PC-9 (cell line): ENCODE measurements at regions of chr7 and their contacts with region 1.

Region 1: DNA sequence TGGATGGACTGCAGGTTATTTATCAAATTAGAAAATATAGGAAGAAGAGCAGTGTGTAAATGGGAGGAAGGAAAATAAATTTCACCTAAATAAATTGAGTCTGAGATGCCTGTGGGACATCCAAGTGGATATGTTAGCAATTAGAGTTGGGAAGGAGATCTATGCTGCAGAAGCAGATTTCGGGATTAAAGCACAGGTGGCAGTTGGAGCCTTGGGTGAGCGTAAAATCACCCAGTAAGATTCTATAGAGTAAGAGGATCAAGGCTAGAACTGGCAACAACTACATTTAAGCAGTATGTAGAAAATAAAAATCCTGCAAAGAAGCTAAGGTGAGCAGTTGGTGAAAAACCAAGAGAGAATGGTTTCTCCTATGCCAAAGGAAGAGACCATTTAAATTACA is 8.4 kb downstream of the TRIM4 start:
- DNase-seq: no peak
- H3K4me3 ChIP-seq: no peak overlapping the region
- H3K27ac ChIP-seq: no peak overlapping the region
- H3K4me1 ChIP-seq: no peaks in the 10 kb centered on the region
- H3K27me3 ChIP-seq: no peaks in the 10 kb centered on the region
- CTCF ChIP-seq: no peak

Region 2: GRCh38 chr7:99631295-99632109 is 279.5 kb before region 1 on chr7:
- CTCF ChIA-PET with region 1: no interaction called
- POLR2A ChIA-PET with region 1: no interaction called
- intact Hi-C with region 1: loop called (anchors 2 kb)
- DNase-seq: peak; percentile 50 to 73
- H3K4me3 ChIP-seq: no peak overlapping the region
- H3K27ac ChIP-seq: no peak overlapping the region
- H3K4me1 ChIP-seq: no peaks in the 10 kb centered on the region
- H3K27me3 ChIP-seq: no peaks in the 10 kb centered on the region
- CTCF ChIP-seq: peak; percentile 76

Region 3: GRCh38 chr7:100071018-100071723 is 160.2 kb after region 1 on chr7:
- CTCF ChIA-PET with region 1: no interaction called
- POLR2A ChIA-PET with region 1: no interaction called
- intact Hi-C with region 1: no loop called
- DNase-seq: no peak
- H3K4me3 ChIP-seq: no peak overlapping the region
- H3K27ac ChIP-seq: no peak overlapping the region
- H3K4me1 ChIP-seq: no peaks in the 10 kb centered on the region
- H3K27me3 ChIP-seq: no peaks in the 10 kb centered on the region
- CTCF ChIP-seq: no peak